ENCODE measurements at regions of chr19 and their contacts with region 1.

Region 1: GRCh38 chr19:3429581-3430080 is 50.7 kb downstream of the SMIM24 start:
- DNase-seq: peak; percentile 75 to 97 (median 86)

Region 2: GRCh38 chr19:3324321-3324856 is 105.2 kb before region 1 on chr19:
- intact Hi-C with region 1: loop called (anchors 1 kb)
- DNase-seq: peak in 6 of 10 donors; percentile 26 to 86 (median 66)

Region 3: GRCh38 chr19:3346677-3347353 is 82.8 kb before region 1 on chr19:
- intact Hi-C with region 1: loop called (anchors 5 kb)
- DNase-seq: peak; percentile 77 to 98 (median 86)

Region 4: DNA sequence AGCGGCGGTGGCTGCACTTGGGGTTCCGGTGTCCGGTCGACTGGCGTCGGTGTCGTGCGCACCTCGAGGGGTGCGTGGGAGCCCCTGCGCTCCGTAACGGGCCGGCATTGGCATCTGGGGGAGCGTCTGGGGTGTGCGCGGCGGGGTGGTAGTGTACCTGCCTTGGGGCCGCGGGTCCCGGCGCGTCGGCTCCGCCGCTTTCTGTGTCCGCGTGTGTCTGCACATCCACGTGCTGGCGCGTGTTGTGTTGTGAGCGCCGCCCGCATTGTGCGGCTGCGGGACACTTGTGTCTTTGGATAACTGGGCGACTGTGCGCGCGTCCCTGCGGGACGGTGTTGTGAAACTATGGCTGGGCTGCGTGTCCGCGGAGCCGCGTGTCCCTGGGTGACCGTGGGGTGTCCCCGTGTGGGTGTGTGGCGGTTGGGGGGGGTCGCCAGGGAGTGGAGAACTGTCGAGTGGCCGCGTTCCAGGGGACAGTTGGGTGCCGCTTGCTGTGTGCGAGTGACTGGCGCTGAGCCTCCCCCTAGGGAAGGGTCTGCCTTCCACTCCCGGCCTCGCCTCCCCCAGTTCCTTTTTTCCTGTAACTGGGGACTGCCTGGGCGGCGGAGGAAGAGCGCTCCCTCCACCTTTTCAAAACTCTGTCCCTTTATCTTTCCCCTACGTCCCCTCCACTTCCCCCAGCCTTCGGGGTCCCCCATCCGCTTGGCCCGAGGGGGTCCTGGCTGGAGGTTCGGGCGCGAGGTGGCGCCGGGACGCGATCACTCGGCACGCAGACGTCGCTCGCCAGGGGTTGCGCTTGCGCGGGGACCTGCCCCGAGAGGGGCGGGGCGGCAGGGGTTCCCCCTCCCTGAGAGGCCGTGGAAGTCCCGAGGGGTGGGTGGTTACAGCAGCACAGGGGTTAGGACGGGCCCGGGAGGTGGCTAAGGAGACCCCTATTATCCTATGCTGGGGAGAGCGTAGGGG is 68.9 kb before region 1 on chr19:
- intact Hi-C with region 1: loop called (anchors 5 kb)
- DNase-seq: peak in 9 of 10 donors; percentile 72 to 96 (median 81)